ENCODE measurements at regions of chr3 and their contacts with region 1.

Region 1: GRCh38 chr3:66302288-66302687 is 81.5 kb downstream of the SLC25A26 start:
- DNase-seq: peak; percentile 80
- H3K4me3 Mint-ChIP-seq: peak overlapping the region; percentile 68
- H3K27ac Mint-ChIP-seq: peak overlapping the region; percentile 95
- H3K4me1 Mint-ChIP-seq: peaks cover 53% of the 10 kb centered on the region
- H3K27me3 Mint-ChIP-seq: no peaks in the 10 kb centered on the region

Region 2: GRCh38 chr3:65447264-65448027 is 854.8 kb before region 1 on chr3:
- intact Hi-C with region 1: no loop called
- DNase-seq: no peak
- H3K4me3 Mint-ChIP-seq: no peak overlapping the region
- H3K27ac Mint-ChIP-seq: no peak overlapping the region
- H3K4me1 Mint-ChIP-seq: no peaks in the 10 kb centered on the region
- H3K27me3 Mint-ChIP-seq: no peaks in the 10 kb centered on the region

Region 3: DNA sequence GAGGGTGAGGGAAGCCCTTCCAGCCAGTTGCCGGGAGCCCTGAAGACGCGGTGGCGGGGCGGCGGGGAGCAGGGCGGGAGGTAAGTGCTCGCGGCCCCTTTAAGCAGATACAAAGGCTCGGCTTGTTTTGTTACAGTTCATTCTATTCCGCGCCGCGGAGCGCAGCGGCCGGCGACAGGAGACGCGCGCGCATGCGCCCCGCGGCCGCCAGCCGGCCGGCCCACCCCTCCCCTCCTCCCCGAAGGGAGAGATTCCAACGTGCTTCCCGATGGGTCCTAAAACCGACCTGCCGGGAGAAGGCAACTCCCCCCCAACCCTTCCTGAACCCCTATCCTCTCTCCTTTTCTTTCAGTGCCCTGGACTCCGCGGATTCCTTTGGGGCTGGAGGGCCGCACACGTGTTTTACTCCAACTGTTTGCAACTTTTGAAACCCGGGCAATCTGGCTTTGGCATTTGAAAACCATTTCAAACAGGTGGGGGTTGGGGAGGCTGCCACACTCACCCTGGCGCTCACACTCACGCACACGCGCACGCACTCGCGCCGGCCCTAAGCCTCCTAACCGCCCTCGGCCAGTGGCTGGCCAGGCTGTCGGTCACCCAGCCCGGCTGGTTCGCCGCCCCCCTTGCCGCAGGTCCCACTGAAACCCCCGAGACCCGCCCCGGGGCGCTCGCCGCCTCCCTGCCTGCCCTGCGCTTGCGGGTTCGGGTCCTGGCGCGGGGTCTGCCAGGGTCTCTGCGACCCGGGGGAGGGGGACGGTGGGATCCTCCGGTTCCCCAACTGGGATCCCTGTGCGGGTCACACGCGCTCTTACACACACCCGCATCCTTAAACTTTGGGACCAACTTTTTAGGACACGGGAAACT is 263.3 kb before region 1 on chr3 and contains the start of gene MAGI1:
- intact Hi-C with region 1: loop called (anchors 10 kb)
- DNase-seq: peak; percentile 80
- H3K4me3 Mint-ChIP-seq: peak within 1 kb of the TSS; percentile 96
- H3K27ac Mint-ChIP-seq: peak within 1 kb of the TSS; percentile 88
- H3K4me1 Mint-ChIP-seq: peaks cover 9% of the 10 kb centered on the region
- H3K27me3 Mint-ChIP-seq: peaks cover 61% of the 10 kb centered on the region
- total RNA-seq, gene MAGI1: 2.0 and 2.2 TPM in 2 replicates

Region 4: GRCh38 chr3:66348704-66349103 is 46.4 kb after region 1 on chr3:
- intact Hi-C with region 1: loop called (anchors 5 kb)
- DNase-seq: no peak
- H3K4me3 Mint-ChIP-seq: no peak overlapping the region
- H3K27ac Mint-ChIP-seq: no peak overlapping the region
- H3K4me1 Mint-ChIP-seq: peaks cover 2% of the 10 kb centered on the region
- H3K27me3 Mint-ChIP-seq: no peaks in the 10 kb centered on the region

Measured in activated CD4-positive, alpha-beta T cell treated with anti-CD3 and anti-CD28 coated beads, Interleukin-2, amount 10 ng/mL, durations not matched to agents 24 days and 14 days (primary cell).